ENCODE measurements at regions of chr11 and their contacts with region 1.

Region 1: DNA sequence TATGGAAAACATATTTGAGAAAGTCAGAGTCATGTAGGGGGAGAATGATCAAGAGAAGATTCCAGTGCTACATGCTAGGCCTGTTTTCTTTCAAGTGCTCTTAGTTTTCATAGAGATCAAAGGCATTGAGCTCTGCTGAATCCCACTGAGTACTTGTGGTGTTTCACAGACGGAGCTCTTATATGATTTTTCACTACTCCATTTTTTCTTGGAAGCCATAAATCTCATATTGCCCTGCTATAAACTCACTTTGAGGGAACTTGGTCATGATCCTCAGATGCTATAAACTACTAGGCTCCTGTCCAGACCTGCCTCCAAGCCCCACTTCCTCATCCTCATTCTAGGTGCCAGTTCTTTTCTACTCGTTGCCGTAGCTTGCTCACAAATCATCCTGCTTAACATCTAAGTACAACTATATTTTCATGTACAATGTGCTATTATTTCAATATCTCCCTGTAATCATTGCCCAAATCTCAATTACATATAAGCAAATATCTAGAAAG is 180.8 kb upstream of the CCDC179 start:
- DNase-seq: peak; percentile 45
- H3K4me3 ChIP-seq: no peak overlapping the region
- H3K27ac ChIP-seq: no peak overlapping the region
- H3K4me1 ChIP-seq: no peaks in the 10 kb centered on the region
- H3K27me3 ChIP-seq: no peaks in the 10 kb centered on the region
- CTCF ChIP-seq: no peak

Region 2: GRCh38 chr11:24005202-24005876 is 964.3 kb after region 1 on chr11:
- intact Hi-C with region 1: loop called (anchors 5 kb)
- DNase-seq: no peak
- H3K4me3 ChIP-seq: no peak overlapping the region
- H3K27ac ChIP-seq: no peak overlapping the region
- H3K4me1 ChIP-seq: no peaks in the 10 kb centered on the region
- H3K27me3 ChIP-seq: no peaks in the 10 kb centered on the region
- CTCF ChIP-seq: no peak

Measured in colonic mucosa (tissue), 4 donors.